WTC11 (cell line): ENCODE measurements at regions of chr2 and their contacts with region 1.

Region 1: DNA sequence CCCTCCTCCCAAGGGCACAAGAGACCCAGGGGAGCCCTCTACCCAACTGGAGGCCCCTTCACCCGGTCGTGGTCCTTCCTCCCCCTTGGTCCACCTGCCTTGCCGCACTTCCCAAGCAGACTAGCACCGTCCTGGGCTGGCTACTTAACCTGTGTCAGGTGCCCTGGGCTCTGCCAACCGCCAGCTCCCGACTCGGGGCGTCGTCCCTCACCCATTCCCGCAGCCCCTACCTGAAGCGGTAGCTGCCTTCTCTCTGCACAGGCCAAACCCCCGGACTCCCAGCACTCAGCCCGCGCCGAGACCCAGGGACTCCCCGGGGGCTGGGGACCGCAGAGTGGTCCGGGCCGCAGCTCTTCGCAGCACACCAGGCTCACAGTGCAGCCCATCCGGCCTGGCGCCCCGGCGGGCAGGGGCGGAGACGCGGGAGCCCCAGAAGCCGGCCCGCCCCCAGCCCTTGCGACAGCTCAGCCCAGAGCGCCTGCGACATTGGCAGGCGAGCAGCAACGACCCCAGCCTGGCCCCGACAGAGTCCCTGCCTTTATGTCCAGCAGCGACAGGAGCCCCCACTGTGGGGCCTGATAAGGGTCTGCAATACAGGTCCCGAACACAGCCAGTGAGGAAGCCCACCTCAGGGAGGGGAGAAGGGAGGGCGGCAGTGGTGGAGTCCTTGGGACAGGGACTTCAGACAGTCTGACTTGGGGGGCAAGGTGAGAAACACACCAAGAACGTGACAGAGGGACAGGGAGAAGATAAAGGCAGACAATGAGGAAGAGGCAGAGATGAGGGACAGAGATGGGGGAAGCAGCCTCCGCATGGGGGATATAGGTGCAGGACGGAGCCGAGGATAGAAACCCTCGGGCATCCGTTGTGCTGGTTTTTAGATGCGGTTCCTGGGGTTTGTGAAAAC is 31.0 kb upstream of the TNS1 start:
- DNase-seq: peak; percentile 54
- ATAC-seq: peak; percentile 46
- H3K4me3 Mint-ChIP-seq: peak overlapping the region; percentile 68
- H3K27ac Mint-ChIP-seq: no peak overlapping the region
- H3K4me1 Mint-ChIP-seq: peaks cover 2% of the 10 kb centered on the region; the same call in 1 of the 2 replicates
- H3K27me3 Mint-ChIP-seq: peaks cover 30% of the 10 kb centered on the region
- CTCF ChIP-seq: no peak

Region 2: GRCh38 chr2:218003981-218004419 is 29.8 kb before region 1 on chr2:
- CTCF ChIA-PET with region 1: interaction called, 10 read pairs
- POLR2A ChIA-PET with region 1: no interaction called
- DNase-seq: no peak
- ATAC-seq: no peak
- H3K4me3 Mint-ChIP-seq: no peak overlapping the region
- H3K27ac Mint-ChIP-seq: no peak overlapping the region
- H3K4me1 Mint-ChIP-seq: peaks cover 37% of the 10 kb centered on the region
- H3K27me3 Mint-ChIP-seq: peaks cover 14% of the 10 kb centered on the region
- CTCF ChIP-seq: no peak

Region 3: DNA sequence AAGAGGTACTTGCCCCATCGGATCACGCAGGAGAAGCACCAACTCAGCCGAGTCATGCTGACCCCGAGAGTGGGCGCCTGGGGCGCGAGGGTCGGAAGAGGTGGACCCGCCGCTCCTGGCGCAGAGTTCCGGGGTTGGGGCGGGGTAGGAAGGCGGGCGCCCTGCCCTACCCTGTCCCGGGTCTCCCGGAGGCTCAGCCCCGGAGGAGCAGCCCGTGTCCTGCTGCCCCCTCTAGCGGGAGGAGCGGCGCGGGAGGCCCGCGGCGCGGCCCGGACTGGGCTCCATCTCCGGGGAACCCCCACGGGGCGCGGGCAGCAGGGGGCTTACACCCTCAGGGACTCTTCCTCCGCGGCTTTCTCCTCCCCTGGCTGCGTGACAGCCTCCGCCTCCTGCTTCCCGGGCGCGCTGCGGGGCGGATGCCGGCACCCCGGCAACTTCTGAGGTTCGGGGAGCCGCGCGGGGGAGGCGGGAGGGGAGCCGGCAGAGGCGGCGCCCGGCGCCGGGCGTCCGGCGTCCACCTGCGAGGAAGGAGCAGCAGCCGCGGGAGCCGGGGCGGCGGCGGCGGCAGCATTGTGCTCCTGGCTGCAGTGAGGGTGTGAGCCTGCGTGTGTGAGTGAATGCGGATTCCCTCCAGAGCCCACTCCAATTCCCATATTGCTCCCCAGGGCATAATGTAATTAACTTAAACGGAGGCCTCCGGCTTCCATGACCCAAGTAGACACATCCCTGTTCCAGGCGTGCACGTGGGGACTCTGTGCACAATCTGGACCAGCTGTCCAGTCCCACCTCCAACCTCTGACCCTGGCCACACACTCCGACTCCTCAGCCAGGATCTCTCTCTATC is 23.5 kb before region 1 on chr2:
- CTCF ChIA-PET with region 1: interaction called, 12 read pairs
- POLR2A ChIA-PET with region 1: interaction called, 5 read pairs
- DNase-seq: no peak
- ATAC-seq: peak; percentile 62
- H3K4me3 Mint-ChIP-seq: peak overlapping the region; percentile 80
- H3K27ac Mint-ChIP-seq: no peak overlapping the region
- H3K4me1 Mint-ChIP-seq: peaks cover 36% of the 10 kb centered on the region
- H3K27me3 Mint-ChIP-seq: peaks cover 50% of the 10 kb centered on the region
- CTCF ChIP-seq: no peak

Region 4: DNA sequence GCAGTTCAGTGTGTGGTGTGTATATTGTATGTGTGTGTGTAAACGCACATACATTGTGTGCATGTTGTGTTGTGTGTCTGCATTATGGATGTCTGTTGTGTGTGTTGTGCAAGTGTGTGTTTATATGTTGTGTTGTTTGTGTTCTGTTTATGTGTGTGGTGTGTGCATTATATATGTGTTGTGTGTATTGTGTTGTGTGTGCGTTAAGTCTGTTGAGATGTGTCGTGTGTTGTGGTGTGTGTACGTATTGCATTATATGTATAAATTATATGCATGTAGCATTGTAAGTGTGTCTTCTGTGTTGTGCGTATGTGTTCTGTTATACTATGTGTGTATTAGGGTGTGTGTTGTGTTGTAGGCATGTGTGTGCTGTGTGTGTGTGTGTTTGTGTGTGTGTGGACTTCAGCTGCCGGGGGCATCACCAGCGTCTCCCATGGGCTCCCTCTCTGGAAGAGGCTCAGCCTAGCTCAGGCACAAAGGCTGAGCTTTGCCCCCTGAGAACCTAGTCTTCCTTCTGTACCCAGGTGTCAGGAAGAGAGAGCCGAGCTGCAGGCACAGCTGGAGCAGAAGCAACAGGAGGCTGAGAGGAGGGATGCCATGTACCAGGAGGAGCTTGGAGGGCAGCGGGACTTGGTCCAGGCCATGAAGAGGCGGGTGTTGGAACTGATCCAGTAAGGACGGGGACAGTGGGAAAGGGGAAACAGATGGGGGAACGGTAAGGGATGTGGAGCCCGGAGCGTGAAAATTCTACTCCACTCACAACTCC is 48.9 kb after region 1 on chr2:
- CTCF ChIA-PET with region 1: no interaction called
- POLR2A ChIA-PET with region 1: no interaction called
- DNase-seq: no peak
- ATAC-seq: no peak
- H3K4me3 Mint-ChIP-seq: no peak overlapping the region
- H3K27ac Mint-ChIP-seq: no peak overlapping the region
- H3K4me1 Mint-ChIP-seq: no peaks in the 10 kb centered on the region
- H3K27me3 Mint-ChIP-seq: peaks cover 14% of the 10 kb centered on the region
- CTCF ChIP-seq: no peak